T-cell (primary cell): ENCODE measurements at regions of chr4 and their contacts with region 1.

Region 1: GRCh38 chr4:80125252-80126177 is 52.5 kb upstream of the ANTXR2 start:
- DNase-seq: peak in 33 of 35 experiments; percentile 7 to 79 (median 31)
- ATAC-seq: peak; percentile 81 to 88 (median 83)
- H3K4me3 ChIP-seq: no peak overlapping the region
- H3K4me3 Mint-ChIP-seq: peak overlapping the region in 2 of 3 donors; percentile 22 to 26
- H3K27ac ChIP-seq: peak overlapping the region; percentile 91
- H3K27ac Mint-ChIP-seq: peak overlapping the region; percentile 93 to 98
- H3K4me1 ChIP-seq: peaks cover 18 to 39% of the 10 kb centered on the region in 2 experiments
- H3K4me1 Mint-ChIP-seq: peaks cover 52 to 58% (median 55%) of the 10 kb centered on the region in 3 donors
- H3K27me3 ChIP-seq: no peaks in the 10 kb centered on the region
- H3K27me3 Mint-ChIP-seq: no peaks in the 10 kb centered on the region

Region 2: DNA sequence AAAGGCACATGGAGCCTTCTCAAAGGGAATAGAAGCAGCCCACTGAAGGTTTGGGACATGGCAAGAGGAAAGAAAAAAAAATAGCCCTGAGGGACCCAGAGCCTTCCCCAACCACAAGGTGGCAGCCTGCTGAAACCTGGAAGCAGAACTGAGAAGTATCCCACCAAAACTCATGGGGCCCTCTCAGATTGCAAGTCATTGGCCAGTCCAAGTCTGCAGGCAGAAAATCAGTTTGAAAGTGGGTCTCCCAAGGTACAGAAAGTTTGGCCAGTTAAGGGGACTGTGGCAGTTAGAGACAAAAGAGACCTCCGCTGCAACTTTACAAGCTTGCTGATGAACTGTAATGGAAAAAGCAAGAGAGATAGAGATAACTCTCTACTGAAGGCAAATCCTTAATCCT is 208.3 kb before region 1 on chr4:
- CTCF ChIA-PET with region 1: no interaction called
- POLR2A ChIA-PET with region 1: no interaction called
- DNase-seq: peak in 30 of 35 experiments; percentile 4 to 58 (median 30)
- ATAC-seq: peak in 3 of 4 experiments; percentile 35 to 61 (median 49)
- H3K4me3 ChIP-seq: no peak overlapping the region
- H3K4me3 Mint-ChIP-seq: no peak overlapping the region
- H3K27ac ChIP-seq: no peak overlapping the region
- H3K27ac Mint-ChIP-seq: no peak overlapping the region
- H3K4me1 ChIP-seq: no peaks in the 10 kb centered on the region
- H3K4me1 Mint-ChIP-seq: peaks cover 6 to 17% (median 16%) of the 10 kb centered on the region in 3 donors
- H3K27me3 ChIP-seq: no peaks in the 10 kb centered on the region
- H3K27me3 Mint-ChIP-seq: no peaks in the 10 kb centered on the region

Region 3: GRCh38 chr4:80138551-80139538 is 13.3 kb after region 1 on chr4:
- CTCF ChIA-PET with region 1: interaction called, 3 to 34 read pairs
- POLR2A ChIA-PET with region 1: interaction called, 4 to 5 read pairs
- DNase-seq: peak; percentile 24 to 72 (median 53)
- ATAC-seq: peak; percentile 99 to 100 (median 100)
- H3K4me3 ChIP-seq: no peak overlapping the region
- H3K4me3 Mint-ChIP-seq: peak overlapping the region in 2 of 3 donors; percentile 0 to 2
- H3K27ac ChIP-seq: peak overlapping the region; percentile 76
- H3K27ac Mint-ChIP-seq: peak overlapping the region; percentile 95 to 96
- H3K4me1 ChIP-seq: peaks cover 11 to 24% of the 10 kb centered on the region in 2 experiments
- H3K4me1 Mint-ChIP-seq: peaks cover 49 to 62% (median 56%) of the 10 kb centered on the region in 3 donors
- H3K27me3 ChIP-seq: no peaks in the 10 kb centered on the region
- H3K27me3 Mint-ChIP-seq: no peaks in the 10 kb centered on the region

Region 4: DNA sequence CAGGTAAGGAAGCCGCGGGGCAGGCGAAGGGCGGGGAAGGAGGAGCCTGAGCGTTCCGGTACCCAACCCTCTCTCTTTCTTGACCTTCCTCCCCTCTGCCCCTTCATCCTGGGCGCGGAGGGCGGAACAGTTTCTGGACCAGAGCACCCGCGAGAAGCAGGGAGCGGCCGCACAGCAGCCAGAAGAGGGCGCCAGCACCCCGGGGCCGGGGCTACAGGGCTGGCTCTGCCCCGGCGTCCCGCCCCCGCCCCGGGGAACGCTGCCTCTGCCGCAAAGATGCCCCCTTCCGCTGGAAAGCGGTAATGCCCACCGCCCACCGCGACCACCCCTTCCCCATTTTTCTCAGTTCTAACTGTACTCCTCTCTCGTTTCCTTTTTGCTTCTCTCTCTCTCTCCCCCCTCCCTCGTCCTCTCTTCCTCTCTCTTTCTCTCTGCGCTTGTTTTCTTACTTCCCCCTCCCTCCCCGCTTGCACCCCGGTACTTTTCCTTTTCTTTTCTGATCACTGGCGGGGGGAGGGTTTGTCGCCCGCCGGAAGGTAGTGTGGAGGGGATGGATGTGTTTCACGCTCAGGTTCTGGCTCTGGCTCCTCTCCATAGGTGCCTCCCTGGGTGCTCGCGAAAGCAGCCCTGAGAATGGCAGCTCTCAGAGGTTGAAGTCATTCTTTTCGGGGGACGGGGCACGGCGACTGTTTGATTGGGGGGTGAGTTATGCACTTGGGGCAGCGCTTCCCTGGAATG is 58.7 kb after region 1 on chr4:
- CTCF ChIA-PET with region 1: interaction called, 32 to 62 read pairs
- POLR2A ChIA-PET with region 1: interaction called, 3 read pairs
- DNase-seq: peak; percentile 72 to 97 (median 89)
- ATAC-seq: peak; percentile 88 to 93 (median 90)
- H3K4me3 ChIP-seq: peak overlapping the region; percentile 76 to 97
- H3K4me3 Mint-ChIP-seq: peak overlapping the region; percentile 86 to 100 (median 99)
- H3K27ac ChIP-seq: peak overlapping the region; percentile 94
- H3K27ac Mint-ChIP-seq: peak overlapping the region; percentile 99
- H3K4me1 ChIP-seq: peaks cover 22 to 34% of the 10 kb centered on the region in 2 experiments
- H3K4me1 Mint-ChIP-seq: peaks cover 53 to 56% (median 54%) of the 10 kb centered on the region in 3 donors
- H3K27me3 ChIP-seq: peaks cover 0 to 4% of the 10 kb centered on the region in 2 experiments
- H3K27me3 Mint-ChIP-seq: peaks cover 0 to 3% of the 10 kb centered on the region in 2 donors

Region 5: DNA sequence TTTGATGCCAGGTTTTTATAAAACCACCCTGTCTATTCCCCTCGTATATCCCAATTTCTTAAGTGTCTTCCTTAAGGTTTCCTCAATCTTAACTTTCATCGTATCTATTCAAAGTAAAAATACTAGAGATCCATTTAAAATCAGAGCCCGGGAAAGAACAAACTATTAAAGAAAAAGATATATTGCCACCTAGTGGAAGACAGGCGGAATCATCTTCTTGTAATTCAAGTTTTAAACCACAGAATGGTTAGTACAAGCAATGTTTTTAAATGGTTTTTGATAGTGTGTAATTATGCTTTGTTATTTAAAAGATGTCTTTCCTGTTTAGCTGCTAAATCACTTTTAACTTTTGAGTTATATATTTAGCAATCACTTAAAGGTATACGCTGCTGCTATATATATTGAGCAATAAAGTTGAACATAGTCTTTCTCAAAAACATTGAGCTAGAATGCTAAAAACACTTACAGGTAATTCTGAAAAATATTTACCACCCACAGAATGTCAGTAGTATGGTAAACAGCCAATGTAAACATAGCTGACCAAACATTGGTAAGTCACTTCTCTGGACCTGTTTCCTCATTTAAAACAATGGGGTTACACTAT is 90.0 kb after region 1 on chr4:
- CTCF ChIA-PET with region 1: interaction called, 10 to 19 read pairs
- POLR2A ChIA-PET with region 1: interaction called in 1 of 2 experiments, 5 read pairs
- DNase-seq: peak in 1 of 35 experiments; percentile 55
- ATAC-seq: peak in 1 of 4 experiments; percentile 58
- H3K4me3 ChIP-seq: no peak overlapping the region
- H3K4me3 Mint-ChIP-seq: no peak overlapping the region
- H3K27ac ChIP-seq: no peak overlapping the region
- H3K27ac Mint-ChIP-seq: no peak overlapping the region
- H3K4me1 ChIP-seq: no peaks in the 10 kb centered on the region
- H3K4me1 Mint-ChIP-seq: peaks cover 0 to 2% (median 2%) of the 10 kb centered on the region in 3 donors
- H3K27me3 ChIP-seq: peaks cover 0 to 3% of the 10 kb centered on the region in 2 experiments
- H3K27me3 Mint-ChIP-seq: peaks cover 10 to 32% of the 10 kb centered on the region in 2 donors